Testis (tissue), 5 donors: ENCODE measurements at regions of chr7 and their contacts with region 1.

Region 1: DNA sequence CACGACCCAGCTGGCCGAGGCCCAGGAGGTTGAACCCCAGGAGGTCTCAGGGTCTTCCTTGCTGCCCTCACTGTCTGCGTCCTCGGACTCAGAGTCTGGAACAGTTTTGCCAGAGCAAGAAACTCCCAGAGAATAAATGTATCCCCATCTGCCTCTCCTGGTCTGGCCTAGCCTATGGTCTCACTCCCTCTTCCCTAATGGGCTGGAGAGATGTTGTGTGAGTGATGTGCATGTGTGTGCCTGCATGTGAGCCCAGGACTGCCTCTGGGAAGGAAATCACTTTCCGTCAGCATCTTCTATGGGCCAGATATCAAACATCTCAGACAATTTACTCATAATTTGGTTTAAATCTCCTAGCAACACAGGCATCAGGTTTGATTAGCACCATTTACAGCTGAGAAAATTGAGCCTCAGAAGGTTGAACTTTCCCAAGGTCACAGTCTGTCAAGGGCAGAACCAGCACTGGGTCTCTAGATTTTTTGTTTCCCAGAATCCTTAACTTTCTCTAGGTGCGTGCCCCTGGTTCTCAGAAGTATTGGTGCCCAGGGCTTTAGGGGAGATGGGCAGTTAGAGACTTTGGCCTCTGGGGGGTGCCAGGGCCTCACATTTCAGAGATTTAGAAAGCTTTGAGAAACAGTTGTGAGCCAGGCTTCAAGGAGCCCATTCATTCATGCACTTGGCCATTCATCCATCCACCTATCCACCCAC is 4.9 kb downstream of the TMEM270 start:
- DNase-seq: peak; percentile 65
- H3K4me3 ChIP-seq: no peak overlapping the region
- H3K27ac ChIP-seq: no peak overlapping the region
- H3K4me1 ChIP-seq: peaks cover 13% of the 10 kb centered on the region
- H3K27me3 ChIP-seq: no peaks in the 10 kb centered on the region
- CTCF ChIP-seq: peak; percentile 35 to 70 (median 57)
- POLR2A ChIP-seq: no peak

Region 2: GRCh38 chr7:74083117-74083876 is 217.4 kb after region 1 on chr7 and contains the start of gene LIMK1:
- intact Hi-C with region 1: no loop called
- DNase-seq: peak; percentile 83
- H3K4me3 ChIP-seq: peak within 1 kb of the TSS; percentile 68 to 80
- H3K27ac ChIP-seq: peak within 1 kb of the TSS; percentile 39 to 41
- H3K4me1 ChIP-seq: peaks cover 13% of the 10 kb centered on the region
- H3K27me3 ChIP-seq: no peaks in the 10 kb centered on the region
- CTCF ChIP-seq: no peak
- POLR2A ChIP-seq: no peak
- total RNA-seq, gene LIMK1: 42.4 to 54.8 TPM

Region 3: GRCh38 chr7:74206589-74207120 is 340.8 kb after region 1 on chr7:
- intact Hi-C with region 1: loop called (anchors 10 kb)
- DNase-seq: peak; percentile 91
- H3K4me3 ChIP-seq: no peak overlapping the region
- H3K27ac ChIP-seq: no peak overlapping the region
- H3K4me1 ChIP-seq: no peaks in the 10 kb centered on the region
- H3K27me3 ChIP-seq: no peaks in the 10 kb centered on the region
- CTCF ChIP-seq: peak; percentile 92 to 98 (median 96)
- POLR2A ChIP-seq: no peak